ENCODE measurements at regions of chr2 and their contacts with region 1.

Region 1: DNA sequence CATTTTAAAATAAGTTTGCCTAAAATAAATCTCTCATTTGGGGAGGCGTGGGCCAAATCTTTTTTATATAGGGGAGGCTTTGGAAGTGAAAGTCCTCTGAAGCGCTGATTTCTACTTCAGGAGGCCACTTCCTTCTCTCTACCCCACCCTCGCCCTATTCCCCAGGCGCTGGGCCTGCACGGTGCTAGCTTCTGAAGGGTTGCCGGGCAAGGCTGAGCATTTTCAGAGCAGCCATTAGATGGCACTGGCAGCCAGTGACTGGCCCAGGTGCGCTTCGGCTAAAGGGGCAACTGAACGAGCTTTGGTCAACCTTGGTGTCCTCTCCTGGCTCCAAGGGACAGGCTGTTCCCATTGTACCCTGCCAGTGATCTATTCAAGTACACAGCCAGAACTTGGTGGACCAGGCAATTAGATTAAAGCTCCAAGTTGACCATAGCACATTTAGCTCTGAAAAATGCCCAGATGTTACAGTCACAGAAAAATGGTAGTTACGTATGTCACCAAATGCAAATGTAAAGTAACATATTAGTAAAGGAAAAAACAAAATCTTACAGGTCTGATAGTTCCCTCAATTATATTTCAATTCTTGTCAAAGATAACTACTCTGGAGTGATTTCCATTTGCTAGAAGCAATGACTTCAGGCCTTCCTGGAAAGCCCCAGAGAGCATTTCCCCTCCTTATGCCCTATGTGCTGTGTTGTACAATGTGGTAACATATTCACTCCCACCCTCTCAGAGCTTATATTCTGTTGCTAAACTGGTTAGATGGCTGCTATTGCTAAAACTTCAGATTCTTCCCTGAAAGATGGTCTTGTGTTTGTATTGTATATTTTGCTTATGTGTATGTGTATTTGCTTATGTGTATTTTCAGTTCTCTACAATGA is 2.1 kb downstream of the POMC start:
- DNase-seq: peak; percentile 74
- ATAC-seq: peak; percentile 74
- H3K4me3 Mint-ChIP-seq: no peak overlapping the region
- H3K27ac Mint-ChIP-seq: peak overlapping the region; percentile 42
- H3K4me1 Mint-ChIP-seq: peaks cover 23% of the 10 kb centered on the region
- H3K27me3 Mint-ChIP-seq: peaks cover 28% of the 10 kb centered on the region

Region 2: GRCh38 chr2:25201265-25201664 is 35.0 kb after region 1 on chr2:
- CTCF ChIA-PET with region 1: interaction called, 14 read pairs
- POLR2A ChIA-PET with region 1: no interaction called
- intact Hi-C with region 1: loop called (anchors 1 to 2 kb)
- DNase-seq: no peak
- ATAC-seq: no peak
- H3K4me3 Mint-ChIP-seq: no peak overlapping the region
- H3K27ac Mint-ChIP-seq: no peak overlapping the region
- H3K4me1 Mint-ChIP-seq: peaks cover 9% of the 10 kb centered on the region
- H3K27me3 Mint-ChIP-seq: no peaks in the 10 kb centered on the region

Region 3: DNA sequence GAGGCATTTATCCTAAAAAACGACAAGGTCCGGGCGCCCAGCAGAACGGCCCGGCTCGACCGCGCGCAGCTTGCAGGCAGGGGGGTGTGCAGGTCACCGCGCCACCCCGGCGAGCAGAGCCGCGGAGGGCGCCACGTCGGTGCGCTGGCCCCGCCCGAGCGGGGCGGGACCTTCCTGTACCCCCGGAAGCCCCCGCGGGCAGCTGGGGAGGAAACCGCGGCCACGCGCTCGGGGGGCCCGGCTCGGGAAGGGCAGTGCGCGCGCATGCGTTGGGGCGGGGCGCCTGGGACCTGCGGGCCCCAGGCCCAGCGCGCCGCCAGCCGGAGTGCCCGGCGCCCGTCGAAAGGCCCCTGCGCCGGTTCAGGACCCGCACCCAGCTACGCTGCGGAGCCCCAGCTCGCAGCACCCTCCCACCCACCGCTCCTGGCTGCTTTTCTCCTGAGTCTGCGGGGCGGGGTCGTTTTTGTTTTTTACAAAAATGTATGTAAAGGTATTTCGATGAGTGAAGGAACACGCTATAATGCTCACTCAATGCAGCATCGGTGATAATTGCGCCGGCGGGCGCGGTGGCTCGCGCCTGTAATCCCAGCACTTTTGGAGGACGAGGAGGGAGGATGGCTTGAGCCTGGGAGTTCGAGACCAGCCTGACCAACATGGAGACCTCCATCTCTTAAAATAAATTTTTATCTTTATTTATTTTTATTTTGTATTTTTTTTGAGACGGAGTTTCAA is 49.9 kb after region 1 on chr2:
- CTCF ChIA-PET with region 1: interaction called, 3 read pairs
- POLR2A ChIA-PET with region 1: no interaction called
- intact Hi-C with region 1: loop called in 1 of 2 experiments (anchors 5 kb)
- DNase-seq: peak; percentile 88
- ATAC-seq: peak; percentile 93
- H3K4me3 Mint-ChIP-seq: peak overlapping the region; percentile 65
- H3K27ac Mint-ChIP-seq: peak overlapping the region; percentile 71
- H3K4me1 Mint-ChIP-seq: peaks cover 9% of the 10 kb centered on the region
- H3K27me3 Mint-ChIP-seq: no peaks in the 10 kb centered on the region